ENCODE measurements at regions of chr6 and their contacts with region 1.

Region 1: DNA sequence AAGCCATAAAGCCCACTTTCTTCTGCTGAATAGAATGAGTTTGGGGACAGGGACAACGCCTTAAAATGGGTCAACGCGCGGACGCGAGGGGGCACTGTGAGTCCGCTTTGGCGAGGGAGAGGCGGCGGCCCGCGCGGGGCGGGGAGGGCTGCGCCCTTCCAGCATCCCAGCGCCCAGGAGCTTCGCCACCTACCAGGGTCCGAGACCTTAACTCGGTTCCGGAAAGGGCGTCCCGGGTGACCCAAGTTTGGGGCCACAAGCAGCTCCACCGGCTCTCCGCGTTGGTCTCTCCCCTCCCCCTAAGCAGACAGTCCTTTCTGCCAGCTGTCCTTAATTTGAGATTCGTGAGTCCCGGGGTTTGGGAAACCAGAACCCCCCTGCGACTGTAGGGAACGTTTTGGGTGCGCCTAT is 1.8 kb upstream of the SAMD5 start:
- DNase-seq: peak; percentile 83
- H3K4me3 ChIP-seq: peak overlapping the region; percentile 78
- H3K27ac ChIP-seq: no peak overlapping the region
- H3K4me1 ChIP-seq: peaks cover 8% of the 10 kb centered on the region
- H3K27me3 ChIP-seq: peaks cover 12% of the 10 kb centered on the region
- CTCF ChIP-seq: peak; percentile 94

Region 2: GRCh38 chr6:147390909-147391536 is 115.7 kb before region 1 on chr6:
- CTCF ChIA-PET with region 1: no interaction called
- POLR2A ChIA-PET with region 1: no interaction called
- intact Hi-C with region 1: loop called (anchors 1 kb)
- DNase-seq: peak; percentile 68
- H3K4me3 ChIP-seq: no peak overlapping the region
- H3K27ac ChIP-seq: no peak overlapping the region
- H3K4me1 ChIP-seq: no peaks in the 10 kb centered on the region
- H3K27me3 ChIP-seq: no peaks in the 10 kb centered on the region
- CTCF ChIP-seq: peak; percentile 77

Region 3: DNA sequence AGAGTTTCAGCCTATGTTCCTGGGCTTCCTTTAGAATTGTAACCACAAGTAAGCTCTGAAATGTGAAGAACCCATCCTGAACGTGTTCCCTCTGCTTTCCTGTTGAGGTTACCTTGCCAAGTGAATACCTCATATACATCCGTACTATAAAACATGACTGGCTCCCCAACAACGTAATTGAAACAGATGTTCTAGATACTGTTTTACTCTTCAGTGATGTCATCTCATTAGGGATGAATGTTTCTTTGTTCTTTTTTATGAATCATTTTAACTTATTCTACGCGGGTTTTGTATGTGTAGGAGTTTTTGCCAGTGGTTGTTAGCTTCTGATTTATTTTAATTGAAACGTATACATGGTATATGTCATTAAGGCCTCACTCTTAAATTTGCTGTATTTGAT is 168.6 kb after region 1 on chr6:
- CTCF ChIA-PET with region 1: no interaction called
- POLR2A ChIA-PET with region 1: no interaction called
- intact Hi-C with region 1: loop called (anchors 5 kb)
- DNase-seq: no peak
- H3K4me3 ChIP-seq: no peak overlapping the region
- H3K27ac ChIP-seq: no peak overlapping the region
- H3K4me1 ChIP-seq: peaks cover 41% of the 10 kb centered on the region
- H3K27me3 ChIP-seq: no peaks in the 10 kb centered on the region
- CTCF ChIP-seq: no peak

Region 4: GRCh38 chr6:147856687-147857086 is 350.0 kb after region 1 on chr6:
- CTCF ChIA-PET with region 1: no interaction called
- POLR2A ChIA-PET with region 1: no interaction called
- intact Hi-C with region 1: no loop called
- DNase-seq: no peak
- H3K4me3 ChIP-seq: no peak overlapping the region
- H3K27ac ChIP-seq: no peak overlapping the region
- H3K4me1 ChIP-seq: peaks cover 13% of the 10 kb centered on the region
- H3K27me3 ChIP-seq: no peaks in the 10 kb centered on the region
- CTCF ChIP-seq: no peak

Region 5: GRCh38 chr6:147868427-147869190 is 361.9 kb after region 1 on chr6:
- CTCF ChIA-PET with region 1: no interaction called
- POLR2A ChIA-PET with region 1: no interaction called
- intact Hi-C with region 1: loop called (anchors 2 kb)
- DNase-seq: peak; percentile 94
- H3K4me3 ChIP-seq: peak overlapping the region; percentile 1
- H3K27ac ChIP-seq: peak overlapping the region; percentile 79
- H3K4me1 ChIP-seq: peaks cover 50% of the 10 kb centered on the region
- H3K27me3 ChIP-seq: no peaks in the 10 kb centered on the region
- CTCF ChIP-seq: no peak

Region 6: DNA sequence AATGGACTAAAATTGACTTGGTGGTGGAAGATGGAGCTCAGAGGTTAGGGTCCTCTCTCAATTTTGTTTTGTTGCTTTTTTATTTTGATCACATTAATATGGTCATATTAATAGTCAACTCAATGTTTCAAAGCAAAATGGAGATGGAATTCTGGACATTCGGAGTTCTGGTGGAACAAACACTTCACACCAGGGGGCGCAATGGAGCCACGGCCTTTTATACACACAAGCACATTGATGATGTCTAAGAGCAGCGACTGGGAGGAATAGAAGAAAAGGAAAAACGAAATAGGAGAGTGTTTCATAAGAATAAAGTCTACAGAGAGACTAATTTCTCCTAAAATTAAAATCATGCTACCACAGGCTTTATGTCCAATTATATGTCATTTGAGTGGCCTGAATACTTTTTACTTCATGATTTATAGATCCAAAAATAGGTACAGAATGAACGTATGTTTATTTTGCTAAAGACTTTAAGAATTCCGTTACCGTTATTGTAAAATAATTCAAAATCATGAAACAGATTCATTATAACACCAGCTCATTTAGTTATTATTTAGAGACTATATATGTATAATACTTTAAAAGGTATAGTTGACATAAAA is 638.3 kb after region 1 on chr6:
- CTCF ChIA-PET with region 1: interaction called, 7 read pairs
- POLR2A ChIA-PET with region 1: no interaction called
- intact Hi-C with region 1: loop called (anchors 5 kb)
- DNase-seq: peak; percentile 84
- H3K4me3 ChIP-seq: no peak overlapping the region
- H3K27ac ChIP-seq: no peak overlapping the region
- H3K4me1 ChIP-seq: no peaks in the 10 kb centered on the region
- H3K27me3 ChIP-seq: no peaks in the 10 kb centered on the region
- CTCF ChIP-seq: peak; percentile 97

Region 7: DNA sequence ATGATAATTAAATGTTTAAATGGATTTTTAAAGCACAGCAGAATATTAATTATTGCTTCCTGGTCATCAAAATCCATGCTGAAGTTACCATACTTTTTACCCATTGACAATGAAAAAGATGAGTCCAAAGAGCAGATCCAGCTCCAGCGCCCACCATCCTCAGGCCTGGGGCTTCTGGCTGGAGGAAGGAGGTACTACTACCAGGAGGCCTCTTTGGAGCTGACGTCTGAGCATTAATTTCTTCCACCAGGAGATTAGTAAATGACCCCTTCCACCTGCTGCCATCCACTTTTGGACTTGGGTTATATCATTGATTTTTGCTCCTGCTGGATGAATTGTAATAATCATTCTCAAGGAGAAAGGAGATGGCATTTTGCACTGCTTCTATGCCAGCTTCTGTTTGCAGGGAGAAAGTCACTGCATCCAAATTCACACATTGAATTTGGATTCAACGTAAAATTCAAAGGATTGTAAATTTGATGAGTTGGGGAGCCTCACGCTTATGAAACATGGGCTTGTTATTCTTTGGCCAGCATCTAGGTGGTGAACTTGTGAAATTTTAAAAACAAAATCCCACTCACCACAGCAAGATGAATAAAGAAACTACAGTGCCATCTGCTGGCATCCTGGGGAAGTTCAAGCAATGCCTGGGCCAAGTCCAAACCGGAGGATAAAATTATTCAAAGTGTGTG is 957.8 kb after region 1 on chr6:
- CTCF ChIA-PET with region 1: no interaction called
- POLR2A ChIA-PET with region 1: no interaction called
- intact Hi-C with region 1: loop called (anchors 5 kb)
- DNase-seq: peak; percentile 80
- H3K4me3 ChIP-seq: no peak overlapping the region
- H3K27ac ChIP-seq: no peak overlapping the region
- H3K4me1 ChIP-seq: no peaks in the 10 kb centered on the region
- H3K27me3 ChIP-seq: no peaks in the 10 kb centered on the region
- CTCF ChIP-seq: peak; percentile 95